ENCODE measurements at regions of chr17 and their contacts with region 1.

Region 1: DNA sequence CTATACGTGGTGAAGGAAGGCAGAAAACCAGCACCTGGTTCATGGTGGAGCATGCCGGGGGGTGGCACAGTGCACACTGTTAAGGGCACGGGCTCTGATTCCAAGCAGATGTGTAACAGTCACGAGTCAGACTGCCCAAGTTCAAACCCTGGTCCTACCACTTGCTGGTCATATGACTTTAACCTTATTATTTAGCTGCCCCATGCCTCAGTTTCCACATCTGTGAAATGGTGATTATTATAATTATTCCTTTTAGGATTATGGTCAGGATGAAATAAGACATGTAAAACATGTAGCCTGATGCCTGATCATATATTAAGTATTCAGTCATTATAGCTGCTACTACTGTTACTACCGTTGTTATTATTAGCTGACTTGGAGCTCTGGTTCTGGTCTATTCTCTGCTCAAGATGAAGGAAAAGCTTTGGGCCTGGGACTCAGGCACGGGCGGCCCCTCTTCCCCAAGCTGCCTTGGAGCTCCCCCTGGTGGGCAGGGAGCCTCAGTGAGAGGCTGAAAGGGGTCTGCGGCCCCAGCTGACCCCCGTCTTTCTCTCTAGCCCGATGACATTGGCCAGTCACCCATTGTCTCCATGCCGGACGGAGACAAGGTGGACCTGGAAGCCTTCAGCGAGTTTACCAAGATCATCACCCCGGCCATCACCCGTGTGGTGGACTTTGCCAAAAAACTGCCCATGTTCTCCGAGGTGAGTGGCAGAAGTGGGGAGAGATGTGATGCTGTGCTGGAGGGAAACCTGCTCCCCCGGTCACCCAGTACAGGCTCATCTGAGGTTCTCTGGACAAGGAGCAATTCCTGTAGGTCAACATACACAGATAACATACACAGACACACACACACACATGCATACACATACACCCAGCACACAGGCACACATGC is 14.0 kb downstream of the NR1D1 start:
- DNase-seq: peak; percentile 81
- ATAC-seq: peak; percentile 78
- H3K4me3 Mint-ChIP-seq: no peak overlapping the region
- H3K27ac Mint-ChIP-seq: no peak overlapping the region
- H3K4me1 Mint-ChIP-seq: peaks cover 5% of the 10 kb centered on the region
- H3K27me3 Mint-ChIP-seq: no peaks in the 10 kb centered on the region

Region 2: DNA sequence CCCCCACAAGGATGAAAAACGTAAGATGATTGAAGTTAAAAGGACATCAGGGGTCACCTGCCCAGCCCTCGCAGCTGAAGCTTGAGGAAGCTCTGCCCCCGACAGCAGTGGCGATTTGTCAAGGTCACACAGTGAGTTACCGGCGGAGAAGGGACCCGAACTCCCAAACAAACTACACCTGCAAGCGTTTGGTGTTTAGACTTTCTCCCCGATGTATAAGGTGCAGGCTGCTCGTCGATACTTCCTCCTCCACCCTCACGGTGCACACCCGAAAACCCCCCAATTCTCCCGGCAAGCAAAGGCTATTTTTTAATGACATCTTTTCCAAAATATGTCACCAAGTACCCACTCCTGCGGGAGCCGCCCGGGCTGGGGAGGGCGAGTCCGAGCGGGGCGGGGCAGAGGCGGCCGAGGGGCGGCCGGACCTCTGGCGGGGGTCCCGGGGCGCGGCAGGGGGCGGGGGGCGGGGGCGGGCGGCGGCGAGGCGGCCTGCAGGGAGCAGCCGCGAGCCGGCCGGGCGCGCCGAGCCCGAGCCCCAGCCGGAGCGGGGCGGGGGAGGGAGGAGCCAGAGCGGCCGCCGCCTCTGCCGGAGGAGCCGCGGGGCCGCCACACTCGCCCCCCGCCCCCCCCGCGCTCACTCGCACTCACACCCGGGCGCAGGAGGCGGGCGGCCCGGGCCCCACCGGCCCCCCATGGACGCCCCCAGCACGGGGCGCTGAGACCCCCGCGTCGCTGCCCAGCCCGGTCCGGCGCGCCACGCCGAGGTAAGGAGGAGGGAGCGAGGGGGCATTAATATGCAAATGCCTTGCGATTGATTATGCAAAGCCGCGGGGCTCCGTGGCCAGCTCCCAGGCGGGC is 23.8 kb before region 1 on chr17 and contains the start of gene THRA:
- CTCF ChIA-PET with region 1: interaction called, 11 read pairs
- POLR2A ChIA-PET with region 1: no interaction called
- intact Hi-C with region 1: no loop called
- DNase-seq: peak; percentile 82
- ATAC-seq: peak; percentile 84
- H3K4me3 Mint-ChIP-seq: peak within 1 kb of the TSS; percentile 77
- H3K27ac Mint-ChIP-seq: peak within 1 kb of the TSS; percentile 74
- H3K4me1 Mint-ChIP-seq: peaks cover 45% of the 10 kb centered on the region
- H3K27me3 Mint-ChIP-seq: no peaks in the 10 kb centered on the region
- total RNA-seq, gene THRA: 12.9 to 13.1 TPM

Measured in activated CD4-positive, alpha-beta T cell treated with anti-CD3 and anti-CD28 coated beads for 36 hours (primary cell).